Activated B cell treated with CpG ODN at 0.5 μM for 24 hours (primary cell): ENCODE measurements at regions of chr18 and their contacts with region 1.

Region 1: DNA sequence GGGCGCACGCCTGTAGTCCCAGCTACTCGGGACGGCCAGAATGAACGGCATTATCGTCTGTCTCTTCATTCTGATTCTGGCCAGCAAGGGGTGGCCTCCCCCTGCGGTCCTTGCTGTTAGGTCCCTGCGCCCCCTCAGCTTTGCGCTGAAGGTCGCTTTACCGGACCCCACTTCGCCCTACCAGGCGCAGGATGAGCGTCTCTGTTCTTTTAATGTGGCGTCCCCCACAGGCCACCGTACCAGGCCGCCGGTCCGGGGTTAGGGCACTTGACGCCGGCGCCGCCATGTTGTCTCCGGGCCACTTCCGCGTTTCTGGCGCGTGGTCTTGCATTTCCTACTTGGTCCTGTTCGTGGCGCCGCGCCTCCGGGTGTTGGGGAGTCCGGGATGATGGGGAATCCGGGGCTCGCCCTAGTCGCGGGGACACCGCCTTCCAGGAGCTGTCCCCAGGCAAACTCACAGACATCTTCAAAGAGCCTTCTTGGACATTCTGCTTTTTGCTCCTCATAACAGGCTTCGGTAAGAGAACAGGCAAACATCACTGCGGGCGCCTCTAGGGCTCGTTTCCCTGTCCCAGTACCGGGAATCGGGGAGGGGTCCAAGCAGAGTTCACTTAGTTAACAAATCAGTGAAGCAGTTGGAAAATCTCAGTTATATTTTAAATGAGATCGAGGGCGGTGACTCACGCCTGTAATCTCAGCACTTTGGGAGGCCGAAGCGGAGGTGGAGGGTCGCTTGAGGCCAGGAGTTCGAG is 8.5 kb upstream of the NARS1 start:
- DNase-seq: peak; percentile 90
- ATAC-seq: peak; percentile 91
- H3K4me3 Mint-ChIP-seq: peak overlapping the region; percentile 98
- H3K27ac Mint-ChIP-seq: peak overlapping the region; percentile 99
- H3K4me1 Mint-ChIP-seq: peaks cover 26% of the 10 kb centered on the region
- H3K27me3 Mint-ChIP-seq: no peaks in the 10 kb centered on the region
- CTCF ChIP-seq: no peak

Region 2: GRCh38 chr18:57574866-57575265 is 55.3 kb before region 1 on chr18:
- CTCF ChIA-PET with region 1: no interaction called
- POLR2A ChIA-PET with region 1: no interaction called
- intact Hi-C with region 1: no loop called
- DNase-seq: no peak
- ATAC-seq: no peak
- H3K4me3 Mint-ChIP-seq: no peak overlapping the region
- H3K27ac Mint-ChIP-seq: no peak overlapping the region
- H3K4me1 Mint-ChIP-seq: peaks cover 3% of the 10 kb centered on the region
- H3K27me3 Mint-ChIP-seq: no peaks in the 10 kb centered on the region
- CTCF ChIP-seq: no peak

Region 3: DNA sequence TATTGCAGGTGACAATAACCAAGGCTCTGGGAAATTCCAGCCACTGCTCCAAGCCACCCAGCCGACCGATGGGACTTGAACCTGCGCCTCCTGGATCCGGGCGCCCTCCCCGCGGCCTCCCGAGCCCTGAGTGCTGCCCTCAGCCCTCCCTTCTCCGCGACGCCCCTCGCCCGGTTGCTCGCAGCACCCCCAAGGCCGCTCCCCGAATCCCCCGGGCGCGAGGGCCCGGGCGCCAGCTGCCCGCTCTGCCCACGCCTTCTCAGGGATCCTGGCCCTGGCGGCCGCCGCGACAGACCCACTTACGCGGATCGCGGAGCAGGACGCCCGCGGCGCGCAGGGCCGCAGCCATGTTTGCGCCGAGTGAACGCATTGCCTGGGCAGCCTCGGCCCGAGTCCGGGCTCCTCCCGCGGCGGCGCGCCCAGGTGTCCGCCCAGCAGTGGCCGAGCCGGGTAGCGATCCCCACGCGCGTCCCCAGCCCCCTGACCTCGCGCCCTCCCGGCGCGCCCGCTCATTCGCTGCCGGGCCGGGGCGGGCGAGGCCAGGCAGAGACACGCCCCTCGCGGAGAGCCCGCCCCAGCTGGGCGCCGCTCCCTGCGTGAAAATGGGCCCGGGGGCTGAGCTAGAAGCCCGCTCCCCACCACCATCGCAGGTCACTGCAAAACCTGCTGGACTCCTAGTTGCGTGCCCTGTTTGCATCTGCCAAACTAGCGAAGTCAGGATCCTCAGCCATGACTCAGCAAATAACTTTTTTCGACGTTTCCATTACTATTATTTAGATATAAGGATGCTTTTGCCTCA is 43.7 kb before region 1 on chr18 and contains the start of gene FECH:
- CTCF ChIA-PET with region 1: no interaction called
- POLR2A ChIA-PET with region 1: interaction called, 3 read pairs
- intact Hi-C with region 1: loop called (anchors 2 kb)
- DNase-seq: peak; percentile 70
- ATAC-seq: peak; percentile 96
- H3K4me3 Mint-ChIP-seq: peak within 1 kb of the TSS; percentile 86
- H3K27ac Mint-ChIP-seq: peak within 1 kb of the TSS; percentile 50
- H3K4me1 Mint-ChIP-seq: peaks cover 20% of the 10 kb centered on the region
- H3K27me3 Mint-ChIP-seq: no peaks in the 10 kb centered on the region
- CTCF ChIP-seq: no peak
- total RNA-seq, gene FECH: 9.2 and 9.3 TPM in 2 replicates

Region 4: DNA sequence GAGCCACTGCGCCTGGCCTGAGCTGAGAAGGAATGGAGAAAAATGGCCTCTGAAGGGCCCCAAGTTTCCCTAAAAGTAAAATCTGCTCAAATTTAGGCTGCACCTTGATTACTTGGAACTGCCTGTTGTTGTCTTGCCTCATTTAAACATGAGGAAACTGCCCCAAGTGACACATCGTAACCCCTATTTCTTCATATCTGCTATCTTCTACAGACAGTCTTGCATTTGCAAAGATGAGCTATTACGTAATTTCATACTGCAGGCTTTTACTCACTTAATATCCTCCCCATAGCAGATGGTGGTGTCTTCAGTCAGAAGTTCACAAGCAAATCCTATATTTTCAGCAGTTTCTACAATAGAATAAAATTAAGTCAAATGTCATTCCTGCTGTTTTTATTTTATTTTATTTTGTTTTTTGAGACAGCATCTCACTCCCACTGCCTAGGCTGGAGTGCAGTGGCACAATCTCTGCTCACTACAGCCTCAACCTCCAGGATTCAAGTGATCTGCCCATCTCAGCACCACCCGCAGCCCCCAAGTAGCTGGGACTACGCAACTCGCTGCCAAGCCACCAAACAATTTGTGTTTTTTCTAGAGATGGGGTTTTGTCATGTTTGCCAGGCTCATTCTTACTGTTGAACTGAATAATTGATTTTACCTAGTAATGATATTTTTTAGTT is 36.8 kb after region 1 on chr18:
- CTCF ChIA-PET with region 1: no interaction called
- POLR2A ChIA-PET with region 1: no interaction called
- intact Hi-C with region 1: no loop called
- DNase-seq: no peak
- ATAC-seq: no peak
- H3K4me3 Mint-ChIP-seq: no peak overlapping the region
- H3K27ac Mint-ChIP-seq: peak overlapping the region; percentile 24
- H3K4me1 Mint-ChIP-seq: peaks cover 75% of the 10 kb centered on the region
- H3K27me3 Mint-ChIP-seq: no peaks in the 10 kb centered on the region
- CTCF ChIP-seq: no peak

Region 5: GRCh38 chr18:57748770-57749603 is 118.8 kb after region 1 on chr18:
- CTCF ChIA-PET with region 1: interaction called, 5 read pairs
- POLR2A ChIA-PET with region 1: interaction called, 4 read pairs
- intact Hi-C with region 1: loop called (anchors 2 kb)
- DNase-seq: no peak
- ATAC-seq: peak; percentile 93
- H3K4me3 Mint-ChIP-seq: peak overlapping the region; percentile 56
- H3K27ac Mint-ChIP-seq: peak overlapping the region; percentile 69
- H3K4me1 Mint-ChIP-seq: peaks cover 40% of the 10 kb centered on the region
- H3K27me3 Mint-ChIP-seq: no peaks in the 10 kb centered on the region
- CTCF ChIP-seq: no peak

Region 6: GRCh38 chr18:57826252-57826651 is 196.1 kb after region 1 on chr18:
- CTCF ChIA-PET with region 1: no interaction called
- POLR2A ChIA-PET with region 1: no interaction called
- intact Hi-C with region 1: no loop called
- DNase-seq: no peak
- ATAC-seq: no peak
- H3K4me3 Mint-ChIP-seq: no peak overlapping the region
- H3K27ac Mint-ChIP-seq: no peak overlapping the region
- H3K4me1 Mint-ChIP-seq: peaks cover under 1% of the 10 kb centered on the region
- H3K27me3 Mint-ChIP-seq: no peaks in the 10 kb centered on the region
- CTCF ChIP-seq: no peak

Region 7: GRCh38 chr18:57859314-57859713 is 229.1 kb after region 1 on chr18:
- CTCF ChIA-PET with region 1: interaction called, 4 read pairs
- POLR2A ChIA-PET with region 1: interaction called, 5 read pairs
- intact Hi-C with region 1: loop called (anchors 1 kb)
- DNase-seq: no peak
- ATAC-seq: peak; percentile 54
- H3K4me3 Mint-ChIP-seq: no peak overlapping the region
- H3K27ac Mint-ChIP-seq: no peak overlapping the region
- H3K4me1 Mint-ChIP-seq: no peaks in the 10 kb centered on the region
- H3K27me3 Mint-ChIP-seq: peaks cover 2% of the 10 kb centered on the region
- CTCF ChIP-seq: no peak

Region 8: GRCh38 chr18:58091099-58091611 is 461.0 kb after region 1 on chr18:
- CTCF ChIA-PET with region 1: no interaction called
- POLR2A ChIA-PET with region 1: no interaction called
- intact Hi-C with region 1: loop called (anchors 1 kb)
- DNase-seq: peak; percentile 22
- ATAC-seq: peak; percentile 99
- H3K4me3 Mint-ChIP-seq: peak overlapping the region; percentile 21
- H3K27ac Mint-ChIP-seq: peak overlapping the region; percentile 87
- H3K4me1 Mint-ChIP-seq: peaks cover 21% of the 10 kb centered on the region
- H3K27me3 Mint-ChIP-seq: no peaks in the 10 kb centered on the region
- CTCF ChIP-seq: no peak

Region 9: GRCh38 chr18:58213440-58213839 is 583.3 kb after region 1 on chr18:
- CTCF ChIA-PET with region 1: no interaction called
- POLR2A ChIA-PET with region 1: interaction called, 12 read pairs
- intact Hi-C with region 1: no loop called
- DNase-seq: no peak
- ATAC-seq: no peak
- H3K4me3 Mint-ChIP-seq: no peak overlapping the region
- H3K27ac Mint-ChIP-seq: no peak overlapping the region
- H3K4me1 Mint-ChIP-seq: peaks cover 45% of the 10 kb centered on the region
- H3K27me3 Mint-ChIP-seq: no peaks in the 10 kb centered on the region
- CTCF ChIP-seq: no peak